PC-3 (cell line): ENCODE measurements at regions of chr3 and their contacts with region 1.

Region 1: DNA sequence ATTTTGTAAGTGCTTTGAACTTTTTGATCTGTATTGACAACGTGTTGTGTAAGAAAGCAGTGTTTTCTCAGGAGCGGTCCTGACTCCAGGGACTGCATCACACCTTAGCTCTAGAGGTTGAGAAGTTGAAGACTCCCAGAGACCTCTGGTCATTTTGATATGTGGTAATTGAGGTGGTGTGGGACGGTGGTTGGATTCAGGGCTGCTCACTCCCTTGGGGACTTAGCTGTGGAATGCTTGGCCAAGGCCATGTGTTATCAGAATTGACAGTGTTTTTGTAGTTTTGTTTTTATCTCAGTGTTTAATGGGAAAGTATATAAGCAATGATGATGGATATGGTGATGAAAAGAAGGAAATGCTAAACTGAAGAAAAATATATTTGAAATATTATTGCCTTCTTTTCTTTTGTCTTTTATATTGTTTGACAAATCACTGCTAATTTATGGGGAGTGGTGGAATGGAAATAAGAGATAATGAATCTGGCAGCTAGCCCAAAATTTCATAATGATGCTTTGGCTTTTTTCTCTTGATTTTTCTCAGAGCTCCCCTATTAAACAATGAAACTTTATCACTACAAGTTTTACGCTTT is 16.0 kb downstream of the CMSS1 start:
- DNase-seq: no peak
- ATAC-seq: no peak
- H3K4me3 ChIP-seq: no peak overlapping the region
- H3K27ac ChIP-seq: no peak overlapping the region
- H3K4me1 ChIP-seq: 0 out of 2 replicates have a peak, but pooled peaks cover 12% of the 10 kb centered on the region
- H3K27me3 ChIP-seq: no peaks in the 10 kb centered on the region
- CTCF ChIP-seq: no peak

Region 2: GRCh38 chr3:99817437-99818240 is 16.1 kb before region 1 on chr3 and contains the start of gene CMSS1:
- CTCF ChIA-PET with region 1: no interaction called
- POLR2A ChIA-PET with region 1: no interaction called
- intact Hi-C with region 1: no loop called
- DNase-seq: peak; percentile 93
- ATAC-seq: peak; percentile 93
- H3K4me3 ChIP-seq: peak within 1 kb of the TSS; percentile 86
- H3K27ac ChIP-seq: peak within 1 kb of the TSS; percentile 69
- H3K4me1 ChIP-seq: peaks cover 20% of the 10 kb centered on the region
- H3K27me3 ChIP-seq: no peaks in the 10 kb centered on the region
- CTCF ChIP-seq: 0 out of 2 replicates have a peak, but pooled peaks have one; percentile 28
- total RNA-seq, gene CMSS1: 51.7 and 63.1 TPM in 2 replicates

Region 3: DNA sequence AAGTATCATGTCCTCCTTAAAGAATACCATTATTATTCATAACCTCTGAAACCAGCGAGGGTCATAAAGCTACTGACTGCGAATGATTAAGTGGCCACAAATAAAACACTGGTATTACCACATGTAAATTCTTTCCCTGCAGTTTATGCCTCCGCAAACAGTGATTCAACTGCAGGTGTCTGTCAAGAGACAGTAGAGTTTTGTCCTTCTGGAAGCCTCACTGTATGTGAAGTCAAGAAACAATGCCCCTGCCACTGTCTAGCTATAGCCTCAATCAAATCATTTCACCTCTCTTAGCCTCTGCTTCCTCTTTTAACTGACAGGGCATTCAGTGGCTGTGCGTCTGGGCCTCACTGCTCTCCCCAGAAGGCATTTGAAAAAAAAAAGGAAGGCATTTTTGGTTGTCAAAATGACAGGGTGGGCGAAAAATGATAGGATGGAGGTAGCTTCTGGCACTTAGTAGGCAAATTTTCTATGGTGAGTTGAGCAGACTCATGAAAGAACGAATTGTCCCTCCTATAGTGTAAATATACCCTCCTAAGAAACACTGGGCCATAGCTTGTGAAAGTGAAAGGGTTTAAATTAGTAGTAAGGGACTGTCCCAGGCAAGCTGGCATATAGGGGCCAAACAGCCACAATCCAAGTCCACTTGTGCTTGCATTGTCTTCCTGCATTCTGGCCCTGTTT is 213.9 kb after region 1 on chr3:
- CTCF ChIA-PET with region 1: interaction called, 4 read pairs
- POLR2A ChIA-PET with region 1: no interaction called
- intact Hi-C with region 1: loop called (anchors 2 kb)
- DNase-seq: peak; percentile 98
- ATAC-seq: peak; percentile 96
- H3K4me3 ChIP-seq: peak overlapping the region; percentile 39
- H3K27ac ChIP-seq: peak overlapping the region; percentile 86
- H3K4me1 ChIP-seq: peaks cover 48% of the 10 kb centered on the region
- H3K27me3 ChIP-seq: no peaks in the 10 kb centered on the region
- CTCF ChIP-seq: no peak

Region 4: GRCh38 chr3:100254168-100254777 is 420.6 kb after region 1 on chr3:
- CTCF ChIA-PET with region 1: interaction called, 48 read pairs
- POLR2A ChIA-PET with region 1: interaction called, 6 read pairs
- intact Hi-C with region 1: loop called (anchors 1 kb)
- DNase-seq: peak; percentile 82
- ATAC-seq: peak; percentile 94
- H3K4me3 ChIP-seq: no peak overlapping the region
- H3K27ac ChIP-seq: no peak overlapping the region
- H3K4me1 ChIP-seq: peaks cover 20% of the 10 kb centered on the region
- H3K27me3 ChIP-seq: no peaks in the 10 kb centered on the region
- CTCF ChIP-seq: peak; percentile 97

Region 5: DNA sequence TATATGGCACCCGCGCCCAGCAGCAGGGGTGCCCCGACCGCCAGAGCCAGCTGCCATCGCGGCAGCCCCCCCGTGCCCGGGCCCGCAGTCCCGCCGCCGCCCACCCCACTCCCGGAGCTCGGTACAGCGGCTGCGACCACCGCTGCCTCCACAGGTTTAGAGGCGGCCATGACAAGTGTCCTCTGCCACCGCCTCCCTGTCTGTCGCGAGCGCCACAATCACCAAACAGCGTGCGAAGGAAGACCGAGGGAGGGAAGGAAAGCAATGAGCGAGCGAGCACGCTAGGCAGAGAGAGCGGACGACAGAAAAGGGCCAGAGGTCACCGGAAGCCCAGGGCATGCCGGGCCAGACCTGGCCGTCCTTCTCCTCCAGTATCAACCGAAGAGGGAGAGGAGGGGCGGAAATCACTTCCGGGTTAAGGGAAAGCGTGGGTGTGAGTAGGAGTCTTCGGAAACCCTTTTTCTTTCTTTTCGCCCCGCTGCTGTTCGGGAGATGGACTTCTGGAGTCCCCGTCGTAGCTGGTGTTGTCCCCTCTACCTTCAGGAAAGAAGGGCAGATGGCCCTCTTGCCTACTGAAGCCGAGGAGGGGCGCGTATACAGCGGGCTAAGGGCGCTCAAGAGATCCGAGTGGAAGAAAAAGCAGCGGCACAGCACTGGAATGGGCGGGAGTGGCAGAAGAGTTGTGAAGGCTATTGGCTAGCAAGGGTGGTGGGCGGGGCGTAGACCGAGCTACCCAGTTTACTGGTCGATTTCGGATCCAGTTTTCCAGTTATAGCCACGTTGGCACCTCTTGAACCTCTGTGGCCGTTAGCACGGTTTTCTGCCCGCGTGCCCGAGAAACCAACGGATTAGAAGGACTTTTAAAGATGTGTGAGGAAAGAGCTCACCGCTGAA is 567.3 kb after region 1 on chr3 and contains the starts of genes LNP1 and TOMM70:
- CTCF ChIA-PET with region 1: no interaction called
- POLR2A ChIA-PET with region 1: no interaction called
- intact Hi-C with region 1: loop called (anchors 5 kb)
- DNase-seq: peak; percentile 98
- ATAC-seq: peak; percentile 92
- H3K4me3 ChIP-seq: peak within 1 kb of the TSS; percentile 94
- H3K27ac ChIP-seq: peak within 1 kb of the TSS; percentile 78
- H3K4me1 ChIP-seq: peaks cover 30% of the 10 kb centered on the region
- H3K27me3 ChIP-seq: no peaks in the 10 kb centered on the region
- CTCF ChIP-seq: no peak
- total RNA-seq, gene LNP1: 5.2 and 6.8 TPM in 2 replicates
- total RNA-seq, gene TOMM70: 85.3 and 91.7 TPM in 2 replicates

Region 6: GRCh38 chr3:100590114-100590839 is 756.6 kb after region 1 on chr3:
- CTCF ChIA-PET with region 1: interaction called, 6 read pairs
- POLR2A ChIA-PET with region 1: no interaction called
- intact Hi-C with region 1: loop called (anchors 10 kb)
- DNase-seq: peak; percentile 87
- ATAC-seq: peak; percentile 82
- H3K4me3 ChIP-seq: 0 out of 2 replicates have a peak overlapping the region, but pooled peaks have one; percentile 24
- H3K27ac ChIP-seq: no peak overlapping the region
- H3K4me1 ChIP-seq: peaks cover 19% of the 10 kb centered on the region
- H3K27me3 ChIP-seq: no peaks in the 10 kb centered on the region
- CTCF ChIP-seq: peak; percentile 96